ENCODE measurements at regions of chr11 and their contacts with region 1.

Region 1: GRCh38 chr11:18526521-18527296 is at the start of gene TSG101:
- DNase-seq: peak; percentile 86 to 96 (median 89)
- ATAC-seq: peak; percentile 82
- H3K4me3 ChIP-seq: peak within 1 kb of the TSS; percentile 88
- H3K4me3 Mint-ChIP-seq: peak within 1 kb of the TSS; percentile 100
- H3K27ac ChIP-seq: peak within 1 kb of the TSS; percentile 99 to 100
- H3K27ac Mint-ChIP-seq: peak within 1 kb of the TSS; percentile 100
- H3K4me1 ChIP-seq: peaks cover 31% of the 10 kb centered on the region
- H3K4me1 Mint-ChIP-seq: peaks cover 70% of the 10 kb centered on the region
- H3K27me3 ChIP-seq: no peaks in the 10 kb centered on the region
- H3K27me3 Mint-ChIP-seq: no peaks in the 10 kb centered on the region
- CTCF ChIP-seq: no peak
- total RNA-seq, gene TSG101: 23.5 to 30.1 TPM

Region 2: GRCh38 chr11:18105802-18106574 is 420.7 kb before region 1 on chr11 and contains the start of gene SAAL1:
- CTCF ChIA-PET with region 1: no interaction called
- POLR2A ChIA-PET with region 1: interaction called, 8 read pairs
- intact Hi-C with region 1: loop called in 1 of 2 experiments (anchors 5 kb)
- DNase-seq: peak; percentile 81 to 93 (median 87)
- ATAC-seq: peak; percentile 99
- H3K4me3 ChIP-seq: peak within 1 kb of the TSS; percentile 98
- H3K4me3 Mint-ChIP-seq: peak within 1 kb of the TSS; percentile 98
- H3K27ac ChIP-seq: peak within 1 kb of the TSS; percentile 32 to 43
- H3K27ac Mint-ChIP-seq: peak within 1 kb of the TSS; percentile 81
- H3K4me1 ChIP-seq: peaks cover 17% of the 10 kb centered on the region
- H3K4me1 Mint-ChIP-seq: peaks cover 53% of the 10 kb centered on the region
- H3K27me3 ChIP-seq: no peaks in the 10 kb centered on the region
- H3K27me3 Mint-ChIP-seq: peaks cover 13% of the 10 kb centered on the region
- CTCF ChIP-seq: peak; percentile 89
- total RNA-seq, gene SAAL1: 21.3 to 24.5 TPM

Region 3: GRCh38 chr11:18395735-18396504 is 130.8 kb before region 1 on chr11:
- CTCF ChIA-PET with region 1: no interaction called
- POLR2A ChIA-PET with region 1: interaction called, 47 read pairs
- intact Hi-C with region 1: loop called (anchors 2 to 5 kb)
- DNase-seq: peak; percentile 84 to 98 (median 92)
- ATAC-seq: peak; percentile 62
- H3K4me3 ChIP-seq: peak overlapping the region; percentile 100
- H3K4me3 Mint-ChIP-seq: peak overlapping the region; percentile 99
- H3K27ac ChIP-seq: peak overlapping the region; percentile 89 to 90
- H3K27ac Mint-ChIP-seq: peak overlapping the region; percentile 99
- H3K4me1 ChIP-seq: peaks cover 50% of the 10 kb centered on the region
- H3K4me1 Mint-ChIP-seq: peaks cover 59% of the 10 kb centered on the region
- H3K27me3 ChIP-seq: no peaks in the 10 kb centered on the region
- H3K27me3 Mint-ChIP-seq: no peaks in the 10 kb centered on the region
- CTCF ChIP-seq: no peak

Region 4: DNA sequence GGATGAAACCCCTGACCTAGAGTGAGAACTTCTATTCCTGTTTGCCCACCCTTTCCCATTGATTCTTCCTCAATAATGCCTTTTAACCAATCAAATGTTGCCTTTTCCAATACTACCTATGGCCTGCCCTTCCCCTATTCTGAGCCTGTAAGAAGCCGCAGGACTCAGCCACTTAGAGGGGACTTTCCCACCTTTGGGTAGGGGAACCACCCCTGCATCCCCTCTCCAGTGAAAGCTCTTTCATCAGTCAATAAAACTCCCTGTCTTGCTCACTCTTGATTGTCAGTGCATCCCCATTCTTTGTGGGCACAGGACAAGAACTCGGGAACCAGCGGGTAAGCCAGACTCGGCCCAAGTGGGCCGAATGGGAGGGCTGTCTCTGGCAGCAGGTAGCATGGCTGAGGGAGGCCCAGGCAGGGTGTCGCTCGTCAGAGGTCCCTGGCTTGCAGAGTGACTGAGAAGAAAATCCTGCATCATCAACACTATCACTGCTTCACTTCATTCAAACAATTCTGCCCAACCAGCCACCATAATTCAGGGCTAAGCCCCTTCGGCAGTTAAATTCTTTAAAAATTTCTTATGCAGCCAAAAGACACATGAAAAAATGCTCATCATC is 40.7 kb before region 1 on chr11:
- CTCF ChIA-PET with region 1: no interaction called
- POLR2A ChIA-PET with region 1: no interaction called
- intact Hi-C with region 1: no loop called
- DNase-seq: peak in 1 of 14 experiments; percentile 18
- ATAC-seq: no peak
- H3K4me3 ChIP-seq: no peak overlapping the region
- H3K4me3 Mint-ChIP-seq: no peak overlapping the region
- H3K27ac ChIP-seq: no peak overlapping the region
- H3K27ac Mint-ChIP-seq: no peak overlapping the region
- H3K4me1 ChIP-seq: no peaks in the 10 kb centered on the region
- H3K4me1 Mint-ChIP-seq: peaks cover 6% of the 10 kb centered on the region
- H3K27me3 ChIP-seq: no peaks in the 10 kb centered on the region
- H3K27me3 Mint-ChIP-seq: no peaks in the 10 kb centered on the region
- CTCF ChIP-seq: no peak

Region 5: GRCh38 chr11:18588297-18589252 is 61.9 kb after region 1 on chr11 and contains the start of gene UEVLD:
- CTCF ChIA-PET with region 1: no interaction called
- POLR2A ChIA-PET with region 1: interaction called, 14 read pairs
- intact Hi-C with region 1: loop called in 1 of 2 experiments (anchors 10 kb)
- DNase-seq: peak in 13 of 14 experiments; percentile 5 to 86 (median 38)
- ATAC-seq: peak; percentile 45
- H3K4me3 ChIP-seq: peak within 1 kb of the TSS; percentile 90
- H3K4me3 Mint-ChIP-seq: no peak within 1 kb of the TSS
- H3K27ac ChIP-seq: peak within 1 kb of the TSS; percentile 66 to 92
- H3K27ac Mint-ChIP-seq: no peak within 1 kb of the TSS
- H3K4me1 ChIP-seq: peaks cover 52% of the 10 kb centered on the region
- H3K4me1 Mint-ChIP-seq: no peaks in the 10 kb centered on the region
- H3K27me3 ChIP-seq: no peaks in the 10 kb centered on the region
- H3K27me3 Mint-ChIP-seq: no peaks in the 10 kb centered on the region
- CTCF ChIP-seq: no peak
- total RNA-seq, gene UEVLD: 1.5 to 2.9 TPM

Region 6: GRCh38 chr11:18634140-18635032 is 107.7 kb after region 1 on chr11 and contains the start of gene SPTY2D1:
- CTCF ChIA-PET with region 1: interaction called, 4 read pairs
- POLR2A ChIA-PET with region 1: interaction called, 54 read pairs
- intact Hi-C with region 1: loop called (anchors 1 kb)
- DNase-seq: peak; percentile 90 to 100 (median 96)
- ATAC-seq: peak; percentile 92
- H3K4me3 ChIP-seq: peak within 1 kb of the TSS; percentile 75
- H3K4me3 Mint-ChIP-seq: peak within 1 kb of the TSS; percentile 96
- H3K27ac ChIP-seq: peak within 1 kb of the TSS; percentile 88 to 98
- H3K27ac Mint-ChIP-seq: peak within 1 kb of the TSS; percentile 97
- H3K4me1 ChIP-seq: peaks cover 25% of the 10 kb centered on the region
- H3K4me1 Mint-ChIP-seq: peaks cover 36% of the 10 kb centered on the region
- H3K27me3 ChIP-seq: no peaks in the 10 kb centered on the region
- H3K27me3 Mint-ChIP-seq: no peaks in the 10 kb centered on the region
- CTCF ChIP-seq: no peak
- total RNA-seq, gene SPTY2D1: 58.7 to 66.0 TPM

Region 7: DNA sequence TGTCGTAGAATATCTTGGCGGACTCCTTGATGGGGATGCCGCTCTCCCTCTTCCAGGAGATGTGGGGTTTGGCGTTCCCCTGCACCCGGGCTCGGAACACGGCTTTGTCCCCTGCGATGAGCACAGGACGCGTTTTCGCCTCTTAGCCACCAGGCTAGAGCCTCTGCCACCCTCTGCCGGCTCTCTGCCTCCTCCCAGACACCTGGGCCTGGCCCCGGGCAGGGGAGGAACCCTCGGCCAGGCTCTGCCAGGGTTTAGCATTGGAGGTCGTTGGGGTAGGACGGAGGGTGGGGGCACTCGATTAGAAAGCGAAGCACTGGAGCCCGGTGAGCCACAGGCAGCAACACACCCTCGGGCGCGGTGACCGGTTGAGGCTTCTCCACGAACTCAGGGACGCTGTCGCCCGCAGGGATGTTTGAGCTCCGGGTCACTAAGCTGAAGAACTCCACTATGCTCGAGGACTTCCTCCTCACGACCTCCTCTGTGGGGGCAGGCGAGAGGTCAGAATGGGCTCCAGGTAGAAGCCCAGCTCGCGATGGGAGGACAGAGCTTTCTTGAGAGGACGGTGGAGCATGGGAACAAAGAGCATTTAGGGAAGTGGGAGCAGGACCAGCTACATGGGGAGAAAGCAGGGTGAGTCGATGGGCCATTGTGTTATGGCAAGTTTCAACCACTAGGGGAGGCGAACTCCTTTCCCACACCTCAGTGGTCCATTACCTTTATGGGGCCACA is 195.0 kb after region 1 on chr11:
- CTCF ChIA-PET with region 1: interaction called, 3 read pairs
- POLR2A ChIA-PET with region 1: interaction called, 12 read pairs
- intact Hi-C with region 1: no loop called
- DNase-seq: peak in 13 of 14 experiments; percentile 20 to 77 (median 35)
- ATAC-seq: peak; percentile 45
- H3K4me3 ChIP-seq: peak overlapping the region; percentile 94
- H3K4me3 Mint-ChIP-seq: peak overlapping the region; percentile 82
- H3K27ac ChIP-seq: peak overlapping the region in 1 of 2 donors; percentile 29
- H3K27ac Mint-ChIP-seq: peak overlapping the region; percentile 35
- H3K4me1 ChIP-seq: peaks cover 21% of the 10 kb centered on the region
- H3K4me1 Mint-ChIP-seq: peaks cover 10% of the 10 kb centered on the region
- H3K27me3 ChIP-seq: no peaks in the 10 kb centered on the region
- H3K27me3 Mint-ChIP-seq: no peaks in the 10 kb centered on the region
- CTCF ChIP-seq: peak; percentile 88

Region 8: GRCh38 chr11:20387241-20388095 is 1860.8 kb after region 1 on chr11 and contains the start of gene PRMT3:
- CTCF ChIA-PET with region 1: no interaction called
- POLR2A ChIA-PET with region 1: no interaction called
- intact Hi-C with region 1: loop called in 1 of 2 experiments (anchors 10 kb)
- DNase-seq: peak; percentile 94 to 99 (median 97)
- ATAC-seq: peak; percentile 87
- H3K4me3 ChIP-seq: peak within 1 kb of the TSS; percentile 96
- H3K4me3 Mint-ChIP-seq: peak within 1 kb of the TSS; percentile 99
- H3K27ac ChIP-seq: peak within 1 kb of the TSS; percentile 87 to 97
- H3K27ac Mint-ChIP-seq: peak within 1 kb of the TSS; percentile 99
- H3K4me1 ChIP-seq: peaks cover 20% of the 10 kb centered on the region
- H3K4me1 Mint-ChIP-seq: peaks cover 27% of the 10 kb centered on the region
- H3K27me3 ChIP-seq: no peaks in the 10 kb centered on the region
- H3K27me3 Mint-ChIP-seq: no peaks in the 10 kb centered on the region
- CTCF ChIP-seq: peak; percentile 91
- total RNA-seq, gene PRMT3: 11.2 to 11.8 TPM

Measured in CD4-positive, alpha-beta T cell (primary cell).